ENCODE measurements at regions of chr22 and their contacts with region 1.

Region 1: GRCh38 chr22:49992921-49993648 is 19.5 kb downstream of the IL17REL start:
- DNase-seq: peak; percentile 90
- ATAC-seq: peak; percentile 78

Region 2: GRCh38 chr22:50030297-50031188 is 37.5 kb after region 1 on chr22:
- intact Hi-C with region 1: loop called (anchors 5 kb)
- DNase-seq: peak; percentile 90
- ATAC-seq: peak; percentile 83

Measured in Right ventricle myocardium inferior (tissue), 1 donor.